ENCODE measurements at regions of chr11 and their contacts with region 1.

Region 1: DNA sequence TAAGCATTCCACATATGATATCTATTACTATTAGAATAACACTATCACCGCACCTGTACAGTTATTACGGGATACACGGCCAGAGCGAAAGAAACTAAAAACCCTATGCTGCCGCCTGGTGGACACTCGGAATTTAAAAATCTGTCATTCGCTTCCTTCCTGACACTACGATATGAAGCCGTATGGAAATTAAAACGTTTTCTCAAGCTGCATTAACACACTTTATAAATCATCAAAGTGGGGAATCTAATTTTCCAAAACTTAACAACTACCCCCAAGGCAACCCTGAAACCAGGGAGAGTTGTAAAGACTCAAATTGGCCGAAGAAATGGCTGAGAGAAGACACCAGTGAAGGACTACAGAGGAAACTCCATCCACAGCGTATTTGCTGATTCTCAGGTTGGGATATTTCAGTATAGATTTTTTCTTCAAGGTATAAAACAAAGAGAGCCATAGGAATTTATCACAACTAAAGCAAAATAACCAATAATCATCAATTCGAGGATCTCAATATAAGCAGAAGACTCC is 1.4 kb downstream of the CCDC73 start:
- DNase-seq: peak; percentile 78
- H3K4me3 Mint-ChIP-seq: peak overlapping the region; percentile 21
- H3K27ac Mint-ChIP-seq: no peak overlapping the region
- H3K4me1 Mint-ChIP-seq: peaks cover 13% of the 10 kb centered on the region
- H3K27me3 Mint-ChIP-seq: no peaks in the 10 kb centered on the region
- CTCF ChIP-seq: no peak

Region 2: DNA sequence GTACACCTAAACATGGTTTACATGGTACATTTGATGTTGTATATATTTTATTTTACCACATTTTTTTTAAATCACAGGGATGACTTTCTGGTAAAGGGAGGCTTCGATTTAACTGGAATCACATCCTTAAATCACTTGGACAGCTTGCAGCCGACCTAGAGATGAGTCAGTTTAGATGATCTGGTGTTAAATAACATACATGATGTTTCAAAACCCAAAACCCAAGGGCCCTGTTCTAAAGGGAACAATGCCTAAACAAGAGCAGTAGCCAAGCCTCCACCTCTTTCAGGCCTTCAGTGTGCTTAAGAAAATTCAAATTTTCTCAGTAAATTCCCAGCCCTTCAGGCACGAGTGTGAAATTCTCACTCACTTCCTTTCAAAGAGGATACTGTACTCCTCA is 466.5 kb before region 1 on chr11:
- CTCF ChIA-PET with region 1: interaction called, 5 read pairs
- intact Hi-C with region 1: loop called (anchors 2 kb)
- DNase-seq: no peak
- H3K4me3 Mint-ChIP-seq: no peak overlapping the region
- H3K27ac Mint-ChIP-seq: no peak overlapping the region
- H3K4me1 Mint-ChIP-seq: no peaks in the 10 kb centered on the region
- H3K27me3 Mint-ChIP-seq: peaks cover 18% of the 10 kb centered on the region
- CTCF ChIP-seq: no peak

Region 3: GRCh38 chr11:32586572-32587190 is 206.3 kb before region 1 on chr11:
- CTCF ChIA-PET with region 1: no interaction called
- intact Hi-C with region 1: loop called (anchors 2 kb)
- DNase-seq: peak; percentile 24
- H3K4me3 Mint-ChIP-seq: peak overlapping the region; percentile 31
- H3K27ac Mint-ChIP-seq: no peak overlapping the region
- H3K4me1 Mint-ChIP-seq: no peaks in the 10 kb centered on the region
- H3K27me3 Mint-ChIP-seq: no peaks in the 10 kb centered on the region
- CTCF ChIP-seq: no peak

Region 4: DNA sequence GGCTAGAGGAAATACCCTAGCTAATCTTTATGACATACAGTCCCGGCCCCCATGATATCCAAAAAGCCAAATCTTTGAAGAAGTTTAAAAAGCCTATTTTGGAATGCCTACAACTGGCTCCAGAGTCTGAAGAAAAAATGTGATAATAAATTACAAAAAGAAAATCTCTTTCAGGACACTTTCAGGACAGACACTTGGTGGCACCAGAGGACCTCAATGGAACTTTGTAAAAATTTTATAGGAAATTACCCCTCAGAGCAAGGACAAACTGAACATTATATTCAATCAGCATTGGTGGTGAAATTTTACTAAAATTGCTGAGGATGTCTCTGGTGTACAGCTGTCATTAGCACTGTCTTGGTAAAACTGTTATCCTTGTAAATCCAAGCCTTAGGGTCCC is 79.5 kb before region 1 on chr11:
- CTCF ChIA-PET with region 1: no interaction called
- intact Hi-C with region 1: loop called (anchors 1 kb)
- DNase-seq: peak; percentile 28
- H3K4me3 Mint-ChIP-seq: no peak overlapping the region
- H3K27ac Mint-ChIP-seq: no peak overlapping the region
- H3K4me1 Mint-ChIP-seq: peaks cover 13% of the 10 kb centered on the region
- H3K27me3 Mint-ChIP-seq: no peaks in the 10 kb centered on the region
- CTCF ChIP-seq: peak; percentile 54

Region 5: DNA sequence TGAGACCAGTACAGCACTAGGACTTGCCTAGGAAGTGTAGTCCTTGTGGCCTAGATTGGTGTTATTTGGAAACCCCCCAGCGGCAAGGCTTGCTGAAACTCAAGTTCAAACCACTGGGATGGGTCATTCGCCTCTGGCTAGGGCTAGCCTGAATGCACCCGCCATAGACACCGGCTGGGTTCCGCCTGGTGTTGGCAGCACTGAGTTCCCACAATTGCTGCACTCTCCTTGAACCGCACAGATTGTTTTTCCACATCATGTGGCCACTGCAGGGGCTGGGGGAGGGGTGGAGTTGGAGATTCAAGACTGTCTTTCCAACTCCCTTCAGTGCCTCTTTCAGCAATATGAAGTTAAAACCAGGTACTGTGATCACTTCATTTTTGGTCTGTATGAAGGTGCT is 41.6 kb before region 1 on chr11:
- CTCF ChIA-PET with region 1: no interaction called
- intact Hi-C with region 1: loop called (anchors 1 kb)
- DNase-seq: no peak
- H3K4me3 Mint-ChIP-seq: no peak overlapping the region
- H3K27ac Mint-ChIP-seq: no peak overlapping the region
- H3K4me1 Mint-ChIP-seq: no peaks in the 10 kb centered on the region
- H3K27me3 Mint-ChIP-seq: peaks cover 37% of the 10 kb centered on the region
- CTCF ChIP-seq: no peak

Region 6: GRCh38 chr11:32817181-32817851 is 24.3 kb after region 1 on chr11:
- CTCF ChIA-PET with region 1: no interaction called
- intact Hi-C with region 1: no loop called
- DNase-seq: no peak
- H3K4me3 Mint-ChIP-seq: peak overlapping the region; percentile 2
- H3K27ac Mint-ChIP-seq: peak overlapping the region; percentile 81
- H3K4me1 Mint-ChIP-seq: peaks cover 31% of the 10 kb centered on the region
- H3K27me3 Mint-ChIP-seq: no peaks in the 10 kb centered on the region
- CTCF ChIP-seq: no peak

Region 7: GRCh38 chr11:32838505-32838904 is 45.5 kb after region 1 on chr11:
- CTCF ChIA-PET with region 1: no interaction called
- intact Hi-C with region 1: no loop called
- DNase-seq: no peak
- H3K4me3 Mint-ChIP-seq: no peak overlapping the region
- H3K27ac Mint-ChIP-seq: no peak overlapping the region
- H3K4me1 Mint-ChIP-seq: peaks cover 7% of the 10 kb centered on the region
- H3K27me3 Mint-ChIP-seq: no peaks in the 10 kb centered on the region
- CTCF ChIP-seq: no peak